ENCODE measurements at regions of chr1 and their contacts with region 1.

Region 1: DNA sequence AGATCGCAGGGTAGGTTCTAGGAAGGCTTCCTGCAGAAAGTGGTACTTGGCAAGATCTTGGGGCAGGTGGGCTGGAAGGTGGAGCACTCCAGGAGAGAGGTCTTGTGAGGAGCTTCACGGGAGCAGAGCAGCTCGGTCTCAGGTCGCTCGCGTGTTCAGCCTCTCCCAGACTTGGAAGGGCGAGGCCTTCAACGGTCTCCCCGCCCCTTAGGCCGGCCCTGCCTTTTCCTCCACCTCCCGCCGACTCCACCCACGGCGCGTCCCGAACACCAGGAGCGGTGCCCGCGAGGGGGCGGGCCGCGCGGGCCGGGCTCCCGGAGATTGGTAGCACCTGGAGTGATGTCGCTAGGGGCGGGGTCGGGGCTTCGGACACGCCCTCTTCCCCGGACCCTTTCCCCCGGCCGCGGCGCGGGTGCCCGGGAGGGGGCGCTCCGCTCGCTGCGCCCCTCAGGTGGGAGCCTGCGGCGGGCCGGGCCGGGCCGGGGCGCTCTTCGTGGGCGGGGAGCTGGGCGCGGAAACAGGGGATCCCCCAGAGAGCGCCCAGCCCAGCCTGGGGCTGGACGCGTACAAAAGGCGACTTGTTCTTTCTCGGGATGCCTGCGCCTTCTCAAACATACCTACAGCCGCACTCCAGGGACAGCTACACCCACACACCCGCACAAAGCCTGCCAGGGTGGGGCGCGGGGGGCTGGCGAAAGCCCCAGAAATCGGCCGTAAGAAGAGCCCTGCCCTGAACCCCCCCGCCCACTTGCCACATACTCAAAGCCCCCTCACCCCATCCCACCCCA is 35.5 kb downstream of the AHDC1 start:
- DNase-seq: peak; percentile 95 to 98
- ATAC-seq: peak; percentile 30 to 42
- H3K4me3 ChIP-seq: peak overlapping the region; percentile 30 to 52 (median 38)
- H3K27ac ChIP-seq: peak overlapping the region; percentile 95 to 100 (median 98)
- H3K4me1 ChIP-seq: peaks cover 95 to 96% of the 10 kb centered on the region in 2 donors
- H3K27me3 ChIP-seq: no peaks in the 10 kb centered on the region
- CTCF ChIP-seq: peak; percentile 68 to 92 (median 89)
- POLR2A ChIP-seq: peak; percentile 77 to 82

Region 2: DNA sequence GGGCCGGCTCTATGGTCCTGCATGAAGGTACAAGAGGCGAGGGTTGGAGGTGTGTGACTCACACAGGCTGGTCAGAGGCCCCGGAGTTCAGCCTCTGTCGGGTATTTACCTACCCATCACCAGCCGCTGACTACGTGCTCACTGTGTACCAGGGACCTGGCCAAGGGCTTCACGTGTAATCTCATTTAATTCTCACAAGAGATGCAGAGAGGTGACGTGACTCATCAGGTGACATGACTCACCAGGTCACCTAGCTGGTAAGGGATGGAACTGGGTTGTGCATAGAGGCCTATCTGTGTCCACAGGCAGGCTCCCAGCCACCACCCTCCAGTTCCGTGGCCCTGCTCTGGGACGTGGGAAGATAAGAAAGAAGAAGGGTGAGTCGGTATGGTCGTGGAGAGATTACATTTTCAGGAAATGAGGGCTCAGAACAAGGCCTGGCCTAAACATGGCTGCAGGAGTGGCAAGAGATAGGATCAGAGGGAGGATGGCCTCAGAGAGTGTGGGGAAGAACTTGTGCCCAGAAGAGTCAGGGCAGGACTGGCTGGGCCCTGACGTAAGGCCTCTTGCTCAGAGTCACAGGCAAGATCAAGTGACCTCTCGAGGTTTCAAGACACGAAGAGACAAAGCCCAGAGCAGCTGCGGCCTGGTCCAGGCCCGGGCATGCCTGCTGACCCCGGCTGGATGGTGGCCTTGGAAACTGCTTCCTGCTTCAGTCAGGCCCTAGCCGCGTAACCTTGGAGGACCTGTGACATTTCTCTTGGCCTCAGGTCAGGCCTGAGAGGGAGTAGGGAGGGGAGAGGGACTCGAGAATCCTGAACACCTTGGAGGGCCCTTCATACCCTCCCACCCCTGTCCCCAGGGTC is 25.9 kb before region 1 on chr1:
- in situ Hi-C with region 1: no loop called
- intact Hi-C with region 1: loop called (anchors 2 kb)
- DNase-seq: peak; percentile 87 to 96
- ATAC-seq: peak; percentile 81 to 83
- H3K4me3 ChIP-seq: no peak overlapping the region
- H3K27ac ChIP-seq: peak overlapping the region; percentile 84 to 100 (median 94)
- H3K4me1 ChIP-seq: peaks cover 82 to 84% of the 10 kb centered on the region in 2 donors
- H3K27me3 ChIP-seq: no peaks in the 10 kb centered on the region
- CTCF ChIP-seq: no peak
- POLR2A ChIP-seq: peak; percentile 77

Region 3: GRCh38 chr1:27643701-27644625 is 75.5 kb after region 1 on chr1:
- in situ Hi-C with region 1: no loop called
- intact Hi-C with region 1: no loop called
- DNase-seq: no peak
- ATAC-seq: peak; percentile 60 to 61
- H3K4me3 ChIP-seq: no peak overlapping the region
- H3K27ac ChIP-seq: no peak overlapping the region
- H3K4me1 ChIP-seq: peaks cover 10 to 11% of the 10 kb centered on the region in 2 donors
- H3K27me3 ChIP-seq: no peaks in the 10 kb centered on the region
- CTCF ChIP-seq: peak; percentile 51 to 76 (median 72)
- POLR2A ChIP-seq: no peak

Measured in gastrocnemius medialis (tissue), 4 donors.